HCT116 (cell line): ENCODE measurements at regions of chr9 and their contacts with region 1.

Region 1: GRCh38 chr9:36499174-36499890 is 73.4 kb upstream of the MELK start:
- DNase-seq: no peak
- ATAC-seq: no peak
- H3K4me3 ChIP-seq: no peak overlapping the region
- H3K27ac ChIP-seq: no peak overlapping the region
- H3K4me1 ChIP-seq: no peaks in the 10 kb centered on the region
- H3K27me3 ChIP-seq: no peaks in the 10 kb centered on the region
- CTCF ChIP-seq: no peak
- POLR2A ChIP-seq: no peak
- RAD21 ChIP-seq: no peak

Region 2: GRCh38 chr9:35051069-35051967 is 1448.0 kb before region 1 on chr9:
- CTCF ChIA-PET with region 1: no interaction called
- POLR2A ChIA-PET with region 1: no interaction called
- RAD21 ChIA-PET with region 1: no interaction called
- intact Hi-C with region 1: no loop called
- DNase-seq: peak; percentile 27
- ATAC-seq: peak; percentile 80
- H3K4me3 ChIP-seq: no peak overlapping the region
- H3K27ac ChIP-seq: no peak overlapping the region
- H3K4me1 ChIP-seq: no peaks in the 10 kb centered on the region
- H3K27me3 ChIP-seq: no peaks in the 10 kb centered on the region
- CTCF ChIP-seq: peak; percentile 43 to 73 (median 71); a peak in 5 of 6 replicates
- POLR2A ChIP-seq: no peak
- RAD21 ChIP-seq: peak; percentile 47; the same call in 1 of the 2 replicates

Region 3: DNA sequence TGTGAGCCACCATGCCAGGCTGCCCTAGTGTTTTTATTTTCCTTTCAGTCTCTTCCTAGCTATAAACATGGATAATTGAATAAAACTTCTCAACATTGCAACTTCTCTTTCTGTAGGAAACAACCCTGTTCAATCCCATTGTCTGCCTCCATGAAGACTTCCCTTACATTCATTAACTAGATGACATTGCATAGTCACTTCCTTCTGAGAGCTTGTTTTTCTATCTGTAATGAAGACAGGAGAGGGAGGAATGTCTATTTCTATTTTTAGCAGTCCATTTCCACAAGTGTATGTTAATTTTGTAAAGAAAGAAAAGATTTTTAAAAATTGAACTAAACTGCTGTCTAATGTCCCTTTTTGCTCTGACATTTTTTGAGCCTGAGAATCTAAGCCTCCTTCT is 17.8 kb after region 1 on chr9:
- CTCF ChIA-PET with region 1: no interaction called
- POLR2A ChIA-PET with region 1: no interaction called
- RAD21 ChIA-PET with region 1: no interaction called
- intact Hi-C with region 1: loop called (anchors 1 kb)
- DNase-seq: no peak
- ATAC-seq: no peak
- H3K4me3 ChIP-seq: no peak overlapping the region
- H3K27ac ChIP-seq: no peak overlapping the region
- H3K4me1 ChIP-seq: no peaks in the 10 kb centered on the region
- H3K27me3 ChIP-seq: no peaks in the 10 kb centered on the region
- CTCF ChIP-seq: no peak
- POLR2A ChIP-seq: no peak
- RAD21 ChIP-seq: no peak